MCF 10A (cell line): ENCODE measurements at regions of chr3 and their contacts with region 1.

Region 1: GRCh38 chr3:16048435-16049318 is 125.8 kb upstream of the GALNT15 start:
- DNase-seq: peak; percentile 84
- H3K4me3 Mint-ChIP-seq: no peak overlapping the region
- H3K27ac Mint-ChIP-seq: peak overlapping the region; percentile 3
- H3K4me1 Mint-ChIP-seq: peaks cover 15% of the 10 kb centered on the region
- H3K27me3 Mint-ChIP-seq: no peaks in the 10 kb centered on the region
- CTCF ChIP-seq: peak; percentile 72

Region 2: GRCh38 chr3:15815696-15816095 is 233.0 kb before region 1 on chr3:
- CTCF ChIA-PET with region 1: interaction called, 3 read pairs
- POLR2A ChIA-PET with region 1: interaction called, 5 read pairs
- intact Hi-C with region 1: loop called (anchors 1 kb)
- DNase-seq: peak; percentile 68
- H3K4me3 Mint-ChIP-seq: no peak overlapping the region
- H3K27ac Mint-ChIP-seq: peak overlapping the region; percentile 27
- H3K4me1 Mint-ChIP-seq: peaks cover 18% of the 10 kb centered on the region
- H3K27me3 Mint-ChIP-seq: no peaks in the 10 kb centered on the region
- CTCF ChIP-seq: peak; percentile 43

Region 3: GRCh38 chr3:16177962-16178627 is 129.4 kb after region 1 on chr3:
- CTCF ChIA-PET with region 1: interaction called, 183 read pairs
- POLR2A ChIA-PET with region 1: interaction called, 21 read pairs
- intact Hi-C with region 1: loop called (anchors 1 kb)
- DNase-seq: peak; percentile 83
- H3K4me3 Mint-ChIP-seq: peak overlapping the region; percentile 73
- H3K27ac Mint-ChIP-seq: no peak overlapping the region
- H3K4me1 Mint-ChIP-seq: peaks cover 62% of the 10 kb centered on the region
- H3K27me3 Mint-ChIP-seq: no peaks in the 10 kb centered on the region
- CTCF ChIP-seq: peak; percentile 95

Region 4: DNA sequence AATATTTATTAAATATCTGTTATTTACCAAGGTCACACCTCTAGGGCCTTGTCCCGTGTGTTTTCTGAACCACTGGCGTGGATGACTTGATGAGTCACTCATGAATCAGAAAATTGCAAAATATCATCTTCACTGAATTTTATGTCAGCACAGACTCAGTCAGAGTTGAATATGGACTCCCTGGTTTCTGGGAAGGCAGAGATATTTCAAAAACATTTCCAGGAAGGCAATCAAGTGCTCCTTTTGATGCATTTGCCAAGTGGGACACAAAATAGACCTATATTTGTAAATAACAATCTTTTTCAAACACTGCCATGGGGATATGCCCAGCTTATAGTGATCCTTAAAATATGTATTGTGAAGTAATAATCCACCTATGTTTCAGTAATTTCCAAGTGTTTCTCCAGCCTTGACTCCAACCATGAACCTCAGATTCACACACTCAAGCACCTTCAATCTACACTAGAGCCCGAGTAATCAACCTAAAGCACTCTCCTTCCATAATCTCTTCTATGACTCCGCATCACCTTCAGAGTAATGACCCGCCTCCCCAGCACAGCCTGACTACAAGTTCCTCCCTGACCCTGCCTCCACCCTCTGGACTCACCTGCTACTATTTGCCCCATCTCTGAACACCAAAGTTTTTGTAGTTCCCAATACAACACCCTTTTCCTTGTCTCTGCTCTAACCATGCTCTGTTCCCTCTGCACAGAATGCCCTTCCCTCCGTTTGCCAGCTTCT is 191.8 kb after region 1 on chr3:
- CTCF ChIA-PET with region 1: interaction called, 64 read pairs
- POLR2A ChIA-PET with region 1: interaction called, 9 read pairs
- intact Hi-C with region 1: no loop called
- DNase-seq: peak; percentile 82
- H3K4me3 Mint-ChIP-seq: no peak overlapping the region
- H3K27ac Mint-ChIP-seq: peak overlapping the region; percentile 79
- H3K4me1 Mint-ChIP-seq: peaks cover 33% of the 10 kb centered on the region
- H3K27me3 Mint-ChIP-seq: no peaks in the 10 kb centered on the region
- CTCF ChIP-seq: no peak

Region 5: DNA sequence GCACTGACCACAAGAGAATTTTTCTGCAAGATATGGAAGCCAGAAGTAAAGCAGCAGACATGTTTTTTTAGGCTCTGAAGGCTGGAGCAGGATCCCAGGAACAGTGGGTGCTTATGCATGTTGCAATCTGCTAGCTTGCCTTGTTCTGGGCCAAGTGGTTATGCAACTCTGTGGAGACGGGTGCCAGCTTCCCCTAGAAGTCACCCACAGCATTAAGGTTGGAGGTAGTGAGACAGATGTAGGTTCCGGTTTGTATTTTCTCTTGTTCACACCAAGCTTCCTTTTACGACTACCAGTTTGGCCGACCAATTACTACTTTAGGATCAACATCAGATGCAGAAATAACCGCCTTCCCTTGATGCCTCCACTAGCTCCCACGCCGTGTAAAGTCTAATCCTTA is 204.9 kb after region 1 on chr3:
- CTCF ChIA-PET with region 1: interaction called, 27 read pairs
- POLR2A ChIA-PET with region 1: interaction called, 4 read pairs
- intact Hi-C with region 1: no loop called
- DNase-seq: peak; percentile 78
- H3K4me3 Mint-ChIP-seq: no peak overlapping the region
- H3K27ac Mint-ChIP-seq: no peak overlapping the region
- H3K4me1 Mint-ChIP-seq: peaks cover 22% of the 10 kb centered on the region
- H3K27me3 Mint-ChIP-seq: no peaks in the 10 kb centered on the region
- CTCF ChIP-seq: no peak